Endothelial cell of umbilical vein (primary cell): ENCODE measurements at regions of chr1 and their contacts with region 1.

Region 1: DNA sequence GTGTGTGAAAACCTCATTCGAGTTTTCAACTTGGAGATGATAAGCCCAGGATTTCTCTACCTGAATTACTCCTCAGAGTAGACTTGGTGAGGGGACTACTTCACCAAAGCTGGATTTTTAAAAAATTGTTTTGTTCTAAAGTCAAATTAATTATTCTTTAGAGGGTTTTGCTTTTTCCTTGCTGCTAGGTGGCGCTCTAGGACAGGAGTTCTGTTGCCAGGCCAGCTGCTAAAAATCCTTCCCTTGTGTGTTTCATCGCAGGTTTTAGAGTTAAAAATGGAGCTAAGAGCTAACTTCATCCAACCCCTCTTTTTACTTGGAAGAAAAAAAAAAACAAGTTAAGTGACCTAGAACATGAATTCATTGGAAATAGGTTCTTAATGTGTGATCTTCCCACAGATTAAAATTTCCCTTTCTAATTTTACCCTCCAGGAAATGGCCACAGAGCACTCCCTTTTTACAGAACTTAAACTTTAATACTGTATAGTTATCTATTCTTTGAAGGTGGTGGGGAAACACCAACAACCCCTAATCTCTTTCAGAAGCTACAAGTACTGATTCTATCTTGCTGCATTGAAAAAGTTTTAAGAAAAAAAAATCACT is 36.7 kb upstream of the FAM163A start:
- DNase-seq: peak; percentile 68
- H3K4me3 ChIP-seq: no peak overlapping the region
- H3K27ac ChIP-seq: no peak overlapping the region
- H3K4me1 ChIP-seq: peaks cover 29% of the 10 kb centered on the region
- H3K27me3 ChIP-seq: peaks cover 7 to 14% of the 10 kb centered on the region in 2 experiments
- CTCF ChIP-seq: peak; percentile 62 to 68
- POLR2A ChIP-seq: no peak

Region 2: DNA sequence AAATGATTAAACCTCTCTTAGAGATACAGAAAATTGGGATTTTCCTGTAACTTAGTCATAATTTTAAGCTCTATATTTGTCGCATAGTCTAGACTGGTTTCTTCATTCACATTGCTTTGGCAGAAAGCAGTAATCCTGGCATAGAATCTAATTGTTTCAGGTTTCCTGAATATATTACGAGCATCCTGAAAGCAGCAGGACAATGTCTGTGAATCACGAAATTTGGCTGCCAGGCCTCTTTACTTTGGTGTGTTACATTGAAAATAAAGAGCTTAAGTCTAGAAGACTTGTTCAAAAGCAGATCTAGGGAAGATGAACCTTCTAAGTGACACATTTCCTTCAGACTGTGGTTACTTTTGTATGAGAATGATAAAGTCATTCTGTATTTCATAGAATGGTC is 42.6 kb before region 1 on chr1:
- CTCF ChIA-PET with region 1: interaction called, 20 read pairs
- POLR2A ChIA-PET with region 1: interaction called, 4 read pairs
- dilution Hi-C with region 1: no loop called
- intact Hi-C with region 1: loop called (anchors 1 kb)
- DNase-seq: peak; percentile 96
- H3K4me3 ChIP-seq: no peak overlapping the region
- H3K27ac ChIP-seq: peak overlapping the region; percentile 84
- H3K4me1 ChIP-seq: peaks cover 13% of the 10 kb centered on the region
- H3K27me3 ChIP-seq: peaks cover 0 to 2% of the 10 kb centered on the region in 2 experiments
- CTCF ChIP-seq: no peak
- POLR2A ChIP-seq: no peak

Region 3: DNA sequence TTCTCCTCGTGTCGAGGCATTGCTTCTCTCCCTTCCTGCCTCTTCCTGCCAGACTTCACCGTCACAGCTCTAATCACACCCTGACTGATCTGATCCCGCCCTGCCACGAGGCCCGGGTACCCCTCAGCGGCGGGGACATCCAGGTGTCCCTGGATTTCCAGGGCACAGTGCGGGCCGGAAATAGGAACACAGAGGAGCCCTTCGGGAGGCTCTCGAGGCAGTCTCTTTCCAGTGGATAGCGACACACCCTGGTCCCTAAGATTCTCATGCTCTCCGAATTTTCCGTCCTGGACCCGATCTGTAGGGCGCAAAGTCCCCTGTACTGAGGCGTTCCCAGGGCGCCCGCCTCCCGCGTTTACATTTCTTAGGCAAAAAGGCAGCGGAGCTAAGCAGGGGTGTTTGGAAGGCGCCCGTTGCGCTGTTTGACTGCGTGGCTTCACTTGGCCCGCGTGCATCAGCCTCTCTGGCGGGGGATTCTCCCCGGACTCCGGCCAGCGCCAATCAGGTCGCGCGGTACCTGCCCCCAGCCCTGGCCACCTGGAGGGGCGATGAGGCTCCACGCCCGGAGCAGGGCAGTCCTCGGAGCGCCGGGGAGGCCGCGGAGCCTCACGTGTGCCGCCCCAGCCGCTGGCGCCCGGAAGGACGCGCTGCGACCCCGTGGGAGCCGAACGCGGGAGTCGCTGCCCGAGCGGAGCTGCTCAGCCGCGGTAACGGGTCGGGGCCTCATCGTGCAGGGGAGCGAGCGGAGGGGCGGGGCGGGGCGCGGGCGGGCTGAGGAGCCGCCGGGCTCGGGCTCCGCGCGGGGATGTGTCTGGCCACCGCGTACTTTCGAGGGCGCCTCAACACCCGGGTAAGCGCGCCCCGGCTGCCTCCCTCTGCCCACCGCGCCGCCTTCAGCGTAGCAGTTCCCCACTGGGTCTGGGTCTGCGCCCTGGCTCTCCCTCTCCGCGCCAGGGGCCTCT is 36.6 kb after region 1 on chr1 and contains the start of gene FAM163A:
- CTCF ChIA-PET with region 1: interaction called, 16 read pairs
- POLR2A ChIA-PET with region 1: no interaction called
- dilution Hi-C with region 1: no loop called
- intact Hi-C with region 1: no loop called
- DNase-seq: no peak
- H3K4me3 ChIP-seq: peak within 1 kb of the TSS in 1 of 3 experiments; percentile 3
- H3K27ac ChIP-seq: no peak within 1 kb of the TSS
- H3K4me1 ChIP-seq: no peaks in the 10 kb centered on the region
- H3K27me3 ChIP-seq: peaks cover 54 to 90% of the 10 kb centered on the region in 2 experiments
- CTCF ChIP-seq: no peak
- POLR2A ChIP-seq: no peak
- total RNA-seq, gene FAM163A: not detected in 2 replicates

Region 4: DNA sequence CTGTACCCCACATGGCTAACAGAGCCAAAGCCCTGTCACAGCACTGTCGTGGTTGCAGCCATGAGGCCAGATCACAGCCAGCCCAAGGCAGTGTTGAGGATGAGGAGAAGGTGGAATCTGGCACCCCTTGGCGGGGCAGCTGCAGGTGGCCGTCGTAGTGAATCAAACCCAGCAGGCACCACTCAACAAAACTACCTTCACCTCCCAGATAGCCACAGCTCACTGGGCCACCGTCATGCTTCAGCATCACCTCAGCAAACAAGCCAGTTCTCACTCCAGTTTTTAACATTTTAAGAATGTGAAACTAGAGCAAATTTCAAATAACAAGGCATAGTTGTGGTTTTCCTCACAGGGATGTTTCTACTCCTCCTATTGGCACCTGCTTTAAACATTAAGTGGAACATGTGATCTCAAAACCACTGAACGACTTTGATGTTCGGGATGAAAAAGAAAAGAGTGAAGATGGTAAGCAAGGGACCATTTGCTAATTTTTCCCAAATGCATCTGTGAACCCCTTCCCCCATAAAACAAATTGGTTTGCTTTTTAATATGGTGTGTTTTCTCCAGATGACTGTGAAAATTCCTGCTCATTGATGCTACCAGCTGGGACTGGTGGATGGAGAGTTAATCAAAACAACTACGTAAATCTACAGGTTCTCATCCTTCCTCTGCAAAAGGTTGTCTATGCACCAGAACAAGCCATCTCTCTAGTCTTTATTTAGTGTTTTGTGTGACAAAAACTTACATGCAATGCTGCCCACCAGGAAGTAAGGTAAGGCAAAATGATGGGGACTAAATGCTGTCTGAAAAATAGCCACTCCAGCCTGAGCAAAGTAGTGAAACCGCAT is 125.6 kb after region 1 on chr1:
- CTCF ChIA-PET with region 1: interaction called, 14 read pairs
- POLR2A ChIA-PET with region 1: no interaction called
- dilution Hi-C with region 1: no loop called
- intact Hi-C with region 1: no loop called
- DNase-seq: no peak
- H3K4me3 ChIP-seq: no peak overlapping the region
- H3K27ac ChIP-seq: no peak overlapping the region
- H3K4me1 ChIP-seq: no peaks in the 10 kb centered on the region
- H3K27me3 ChIP-seq: peaks cover 0 to 6% of the 10 kb centered on the region in 2 experiments
- CTCF ChIP-seq: no peak
- POLR2A ChIP-seq: no peak

Region 5: DNA sequence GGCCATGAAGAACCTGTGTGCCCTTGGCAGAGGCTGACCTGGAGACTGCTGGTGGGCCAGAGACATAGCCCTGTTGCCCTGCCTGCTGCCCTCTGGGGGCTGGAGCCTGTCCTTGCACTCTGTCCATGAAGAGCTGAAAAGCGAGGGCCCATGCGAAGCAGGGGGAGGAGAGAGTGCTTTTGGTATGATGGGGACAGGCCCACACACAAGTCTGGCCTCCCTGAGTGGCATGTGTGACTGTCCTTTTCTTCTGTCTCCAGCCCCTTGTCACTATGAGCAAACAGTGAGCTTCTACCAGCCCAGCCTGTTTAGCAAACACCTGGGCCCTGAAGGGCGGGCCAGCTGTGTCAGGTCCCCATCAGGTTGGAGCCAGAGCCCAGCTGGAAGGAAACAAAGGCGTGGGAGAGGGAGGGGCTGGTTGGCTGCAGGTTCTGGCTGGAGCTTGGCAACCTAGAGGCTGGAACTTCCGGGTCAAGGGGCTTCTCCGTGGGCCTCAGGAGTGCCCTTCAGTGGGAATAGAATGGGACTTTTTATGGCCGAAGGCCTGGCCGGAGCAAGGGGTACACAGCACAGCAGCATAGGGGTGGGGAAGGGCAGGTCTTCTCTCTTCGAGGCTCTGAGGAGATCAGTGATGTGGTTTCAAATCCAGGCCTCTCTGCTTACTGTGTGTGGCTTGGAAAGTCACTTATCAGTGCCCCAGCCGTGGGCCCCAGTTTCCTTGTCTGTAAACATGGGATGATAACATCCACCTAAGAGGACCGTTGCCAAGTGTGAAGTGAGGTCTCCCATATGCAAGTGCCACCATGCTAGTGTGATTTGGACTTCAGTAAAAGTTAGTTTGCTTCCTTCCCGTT is 462.6 kb after region 1 on chr1:
- CTCF ChIA-PET with region 1: interaction called, 16 read pairs
- POLR2A ChIA-PET with region 1: no interaction called
- dilution Hi-C with region 1: no loop called
- intact Hi-C with region 1: no loop called
- DNase-seq: peak; percentile 51
- H3K4me3 ChIP-seq: no peak overlapping the region
- H3K27ac ChIP-seq: no peak overlapping the region
- H3K4me1 ChIP-seq: no peaks in the 10 kb centered on the region
- H3K27me3 ChIP-seq: no peaks in the 10 kb centered on the region
- CTCF ChIP-seq: peak; percentile 63 to 81
- POLR2A ChIP-seq: no peak

Region 6: GRCh38 chr1:180482425-180483275 is 776.2 kb after region 1 on chr1:
- CTCF ChIA-PET with region 1: interaction called, 4 read pairs
- POLR2A ChIA-PET with region 1: no interaction called
- dilution Hi-C with region 1: no loop called
- intact Hi-C with region 1: loop called (anchors 5 kb)
- DNase-seq: peak; percentile 71
- H3K4me3 ChIP-seq: no peak overlapping the region
- H3K27ac ChIP-seq: no peak overlapping the region
- H3K4me1 ChIP-seq: peaks cover 5% of the 10 kb centered on the region
- H3K27me3 ChIP-seq: no peaks in the 10 kb centered on the region
- CTCF ChIP-seq: peak; percentile 50 to 60
- POLR2A ChIP-seq: no peak